Esophagus muscularis mucosa (tissue), 4 donors: ENCODE measurements at regions of chr3 and their contacts with region 1.

Region 1: GRCh38 chr3:115085197-115085865 is 61.8 kb downstream of the ZBTB20 start:
- DNase-seq: no peak
- H3K4me3 ChIP-seq: no peak overlapping the region
- H3K27ac ChIP-seq: no peak overlapping the region
- H3K4me1 ChIP-seq: peaks cover 8 to 33% (median 23%) of the 10 kb centered on the region in 4 donors
- H3K27me3 ChIP-seq: no peaks in the 10 kb centered on the region
- CTCF ChIP-seq: peak in 1 of 3 experiments; percentile 7
- EP300 ChIP-seq: no peak
- POLR2A ChIP-seq: no peak

Region 2: GRCh38 chr3:114686621-114687020 is 398.7 kb before region 1 on chr3:
- intact Hi-C with region 1: loop called (anchors 10 kb)
- DNase-seq: no peak
- H3K4me3 ChIP-seq: no peak overlapping the region
- H3K27ac ChIP-seq: peak overlapping the region in 1 of 4 donors; percentile 18
- H3K4me1 ChIP-seq: peaks cover 0 to 17% (median 7%) of the 10 kb centered on the region in 4 donors
- H3K27me3 ChIP-seq: no peaks in the 10 kb centered on the region
- CTCF ChIP-seq: no peak
- EP300 ChIP-seq: no peak
- POLR2A ChIP-seq: no peak

Region 3: GRCh38 chr3:114809668-114810413 is 275.5 kb before region 1 on chr3:
- intact Hi-C with region 1: no loop called
- DNase-seq: no peak
- H3K4me3 ChIP-seq: no peak overlapping the region
- H3K27ac ChIP-seq: no peak overlapping the region
- H3K4me1 ChIP-seq: no peaks in the 10 kb centered on the region
- H3K27me3 ChIP-seq: no peaks in the 10 kb centered on the region
- CTCF ChIP-seq: no peak
- EP300 ChIP-seq: no peak
- POLR2A ChIP-seq: no peak

Region 4: DNA sequence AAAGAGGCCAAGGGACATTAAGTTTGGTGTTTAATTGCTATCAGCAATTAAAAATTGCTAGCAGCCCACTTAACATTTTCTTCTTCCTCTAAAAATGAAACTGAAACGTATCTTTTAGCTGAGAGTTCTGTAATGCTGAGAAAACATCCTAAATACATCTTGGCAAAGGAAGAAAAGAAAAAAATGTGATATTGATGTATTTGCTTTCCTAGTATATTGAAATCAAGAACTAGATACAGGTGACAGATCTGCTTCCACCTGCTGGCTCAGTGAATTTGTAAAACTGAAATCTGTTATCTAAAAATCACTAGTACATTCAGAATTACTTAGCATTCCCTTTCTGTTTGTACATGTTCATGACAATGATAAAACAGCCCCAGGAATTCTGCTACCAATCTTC is 221.5 kb before region 1 on chr3:
- intact Hi-C with region 1: no loop called
- DNase-seq: no peak
- H3K4me3 ChIP-seq: peak overlapping the region; percentile 16 to 46 (median 35)
- H3K27ac ChIP-seq: peak overlapping the region in 3 of 4 donors; percentile 18 to 34 (median 24)
- H3K4me1 ChIP-seq: peaks cover 0 to 21% (median 7%) of the 10 kb centered on the region in 4 donors
- H3K27me3 ChIP-seq: no peaks in the 10 kb centered on the region
- CTCF ChIP-seq: no peak
- EP300 ChIP-seq: no peak
- POLR2A ChIP-seq: no peak

Region 5: DNA sequence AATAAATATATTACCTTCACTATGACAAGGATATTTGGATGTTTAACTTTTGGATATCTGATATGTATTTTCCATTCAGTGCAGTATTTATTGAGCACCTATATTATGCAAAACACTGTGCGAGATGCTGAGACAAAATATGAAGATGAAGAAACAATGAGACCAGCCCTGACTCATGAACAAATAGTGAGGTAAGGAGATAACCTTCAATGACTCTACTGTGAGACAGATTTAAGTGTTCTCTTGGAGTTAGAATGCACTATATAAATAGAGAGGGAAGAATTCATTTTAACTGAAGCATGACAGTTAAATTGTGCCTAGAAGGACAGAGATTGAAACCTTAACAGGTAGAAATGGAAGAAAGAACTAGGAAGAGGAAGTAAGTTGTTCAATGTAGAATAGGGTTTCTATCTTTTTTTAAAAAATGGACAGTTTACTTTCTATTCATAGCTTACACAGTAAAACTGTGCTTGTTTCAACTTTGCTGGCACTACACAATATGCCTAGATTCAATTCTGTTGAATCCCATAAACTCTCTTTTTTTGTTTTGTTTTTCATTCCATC is 62.4 kb before region 1 on chr3:
- intact Hi-C with region 1: no loop called
- DNase-seq: no peak
- H3K4me3 ChIP-seq: no peak overlapping the region
- H3K27ac ChIP-seq: peak overlapping the region in 3 of 4 donors; percentile 37 to 63 (median 49)
- H3K4me1 ChIP-seq: peaks cover 5 to 60% (median 49%) of the 10 kb centered on the region in 4 donors
- H3K27me3 ChIP-seq: no peaks in the 10 kb centered on the region
- CTCF ChIP-seq: no peak
- EP300 ChIP-seq: no peak
- POLR2A ChIP-seq: no peak

Region 6: DNA sequence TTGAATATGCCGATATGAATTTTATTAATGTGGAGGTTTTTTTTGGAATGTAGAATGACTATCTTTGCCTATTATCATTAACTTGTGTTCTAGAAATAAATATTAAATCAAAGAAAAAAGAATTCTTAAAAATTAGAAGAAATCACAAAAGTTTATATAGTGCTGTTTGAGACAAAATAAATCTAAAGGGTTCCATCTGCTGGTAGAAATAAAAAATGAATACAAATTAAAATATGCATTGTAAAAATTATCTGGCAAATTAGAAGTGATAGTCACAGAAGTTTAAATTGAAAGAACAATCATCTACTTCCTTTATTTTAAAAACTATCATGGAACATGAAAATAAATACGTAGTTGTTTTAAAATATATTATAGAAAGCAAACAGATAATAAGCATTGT is 84.5 kb after region 1 on chr3:
- intact Hi-C with region 1: no loop called
- DNase-seq: no peak
- H3K4me3 ChIP-seq: no peak overlapping the region
- H3K27ac ChIP-seq: no peak overlapping the region
- H3K4me1 ChIP-seq: no peaks in the 10 kb centered on the region
- H3K27me3 ChIP-seq: no peaks in the 10 kb centered on the region
- CTCF ChIP-seq: peak in 2 of 3 experiments; percentile 41 to 45
- EP300 ChIP-seq: no peak
- POLR2A ChIP-seq: no peak